WTC11 (cell line): ENCODE measurements at regions of chr11 and their contacts with region 1.

Region 1: DNA sequence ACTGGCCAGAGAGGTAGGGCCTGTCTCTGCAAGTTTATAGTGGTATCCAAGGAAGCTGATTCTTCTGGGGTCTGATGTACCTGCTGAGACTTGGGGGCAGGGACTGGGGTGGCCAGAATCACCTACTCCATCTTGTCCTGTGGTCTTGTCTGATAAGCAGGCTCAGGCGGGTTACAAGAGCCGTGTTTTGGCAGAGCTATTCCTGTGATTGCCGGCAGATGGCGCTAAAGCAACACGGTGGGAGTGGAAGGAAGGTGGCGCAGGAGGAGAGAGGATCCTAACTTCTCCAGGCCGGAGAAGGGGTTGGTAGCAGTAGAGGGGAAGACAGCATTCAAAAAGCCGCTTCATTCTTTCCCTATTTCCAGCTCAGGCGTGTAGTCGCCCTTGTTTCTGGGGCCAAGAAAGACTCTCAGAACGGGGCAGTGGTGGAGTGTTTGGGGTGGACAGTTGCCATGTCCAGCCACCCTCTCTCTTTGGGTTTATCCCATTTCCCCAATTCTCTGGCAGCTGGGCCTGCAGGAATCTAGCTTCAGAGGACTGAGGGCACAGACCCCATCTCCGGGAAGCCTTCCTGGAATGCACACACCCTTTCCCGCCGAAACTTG is 15.1 kb downstream of the CHRM1 start:
- DNase-seq: peak; percentile 94
- ATAC-seq: peak; percentile 54
- H3K4me3 Mint-ChIP-seq: no peak overlapping the region
- H3K27ac Mint-ChIP-seq: no peak overlapping the region
- H3K4me1 Mint-ChIP-seq: peaks cover 31% of the 10 kb centered on the region
- H3K27me3 Mint-ChIP-seq: peaks cover 13% of the 10 kb centered on the region
- CTCF ChIP-seq: peak; percentile 99

Region 2: GRCh38 chr11:62747475-62748160 is 158.4 kb before region 1 on chr11:
- CTCF ChIA-PET with region 1: no interaction called
- POLR2A ChIA-PET with region 1: no interaction called
- DNase-seq: no peak
- ATAC-seq: no peak
- H3K4me3 Mint-ChIP-seq: no peak overlapping the region
- H3K27ac Mint-ChIP-seq: peak overlapping the region; percentile 80
- H3K4me1 Mint-ChIP-seq: peaks cover 6% of the 10 kb centered on the region
- H3K27me3 Mint-ChIP-seq: no peaks in the 10 kb centered on the region
- CTCF ChIP-seq: no peak

Region 3: DNA sequence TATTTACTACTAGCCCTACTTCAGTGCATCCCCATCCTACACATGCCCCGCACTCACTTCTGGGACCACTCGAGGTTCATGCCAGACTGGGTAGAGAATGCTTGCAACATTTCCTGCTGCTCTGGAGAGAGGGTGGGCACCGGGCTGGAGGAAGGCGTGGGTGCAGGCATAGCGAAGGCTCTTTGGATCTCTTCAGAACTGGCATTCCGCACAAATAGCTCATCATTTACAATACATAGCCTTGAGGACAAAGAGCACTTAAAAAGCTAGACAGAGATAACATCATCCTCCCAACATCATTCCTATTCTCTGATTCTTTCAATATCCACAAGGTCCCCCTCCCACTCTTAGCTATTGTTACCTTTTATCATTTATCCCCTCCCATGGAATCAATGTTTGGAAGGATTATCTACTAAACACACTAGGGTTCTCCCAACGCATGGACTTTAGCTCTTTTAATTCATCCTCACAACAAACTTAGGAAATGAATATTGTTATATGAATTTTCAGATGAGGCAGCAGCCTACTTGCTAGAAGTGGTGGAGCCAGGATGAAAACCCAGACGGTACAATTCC is 111.7 kb before region 1 on chr11:
- CTCF ChIA-PET with region 1: no interaction called
- POLR2A ChIA-PET with region 1: no interaction called
- DNase-seq: no peak
- ATAC-seq: no peak
- H3K4me3 Mint-ChIP-seq: no peak overlapping the region
- H3K27ac Mint-ChIP-seq: no peak overlapping the region
- H3K4me1 Mint-ChIP-seq: peaks cover 18% of the 10 kb centered on the region
- H3K27me3 Mint-ChIP-seq: no peaks in the 10 kb centered on the region
- CTCF ChIP-seq: no peak

Region 4: GRCh38 chr11:62847767-62848314 is 58.2 kb before region 1 on chr11:
- CTCF ChIA-PET with region 1: no interaction called
- POLR2A ChIA-PET with region 1: no interaction called
- DNase-seq: no peak
- ATAC-seq: no peak
- H3K4me3 Mint-ChIP-seq: no peak overlapping the region
- H3K27ac Mint-ChIP-seq: no peak overlapping the region
- H3K4me1 Mint-ChIP-seq: peaks cover 20% of the 10 kb centered on the region
- H3K27me3 Mint-ChIP-seq: no peaks in the 10 kb centered on the region
- CTCF ChIP-seq: no peak

Region 5: GRCh38 chr11:62880803-62881578 is 25.0 kb before region 1 on chr11 and contains the start of gene SLC3A2:
- CTCF ChIA-PET with region 1: interaction called, 11 read pairs
- POLR2A ChIA-PET with region 1: no interaction called
- DNase-seq: peak; percentile 87
- ATAC-seq: peak; percentile 80
- H3K4me3 Mint-ChIP-seq: peak within 1 kb of the TSS; percentile 99
- H3K27ac Mint-ChIP-seq: peak within 1 kb of the TSS; percentile 100
- H3K4me1 Mint-ChIP-seq: peaks cover 49% of the 10 kb centered on the region
- H3K27me3 Mint-ChIP-seq: peaks cover 3% of the 10 kb centered on the region; the same call in 1 of the 2 replicates
- CTCF ChIP-seq: peak; percentile 22; the same call in 1 of the 2 replicates
- total RNA-seq, gene SLC3A2: 244 to 334 TPM (median 265 TPM) in 3 replicates

Region 6: DNA sequence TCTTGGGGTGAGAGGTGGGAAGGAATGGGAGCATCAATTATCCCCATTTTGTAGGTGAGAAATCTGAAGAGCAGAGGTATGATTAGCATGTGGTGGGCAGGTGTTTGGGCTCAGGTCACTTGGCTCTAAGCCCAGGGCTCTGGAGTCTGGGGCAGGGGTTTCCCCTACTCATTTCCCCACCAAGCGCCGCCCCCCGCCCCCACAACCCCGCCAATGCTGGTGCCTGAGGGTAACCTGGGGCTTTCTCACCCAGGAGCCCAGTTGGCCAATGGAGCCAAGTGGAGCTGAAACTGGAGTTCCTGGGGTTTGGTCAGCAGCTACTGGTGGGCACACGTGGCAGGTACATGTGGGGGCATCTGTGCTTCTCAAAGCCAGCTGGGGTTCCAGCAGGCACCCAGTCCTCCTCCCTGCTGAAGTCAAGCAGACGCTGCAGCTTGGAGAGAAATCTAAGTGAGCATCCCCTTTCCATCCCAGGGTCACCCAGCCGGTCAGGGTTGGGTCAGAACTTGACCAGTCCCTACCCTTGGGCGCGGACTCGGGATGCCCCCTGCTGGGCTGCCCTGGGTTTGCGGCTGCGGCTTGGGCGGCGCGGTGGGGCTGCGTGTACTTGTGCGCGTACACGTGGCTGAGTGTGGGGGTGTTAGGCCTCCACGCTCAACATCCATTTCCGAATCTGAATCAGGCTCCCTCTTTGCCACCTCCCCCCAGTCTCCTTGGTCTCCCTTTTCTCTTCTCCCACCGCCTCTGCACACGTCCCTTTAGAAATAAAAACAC is 16.8 kb after region 1 on chr11:
- CTCF ChIA-PET with region 1: interaction called, 268 read pairs
- POLR2A ChIA-PET with region 1: interaction called, 5 read pairs
- DNase-seq: peak; percentile 75
- ATAC-seq: peak; percentile 7
- H3K4me3 Mint-ChIP-seq: peak overlapping the region; percentile 65
- H3K27ac Mint-ChIP-seq: no peak overlapping the region
- H3K4me1 Mint-ChIP-seq: peaks cover 38% of the 10 kb centered on the region
- H3K27me3 Mint-ChIP-seq: peaks cover 60% of the 10 kb centered on the region
- CTCF ChIP-seq: peak; percentile 54

Region 7: DNA sequence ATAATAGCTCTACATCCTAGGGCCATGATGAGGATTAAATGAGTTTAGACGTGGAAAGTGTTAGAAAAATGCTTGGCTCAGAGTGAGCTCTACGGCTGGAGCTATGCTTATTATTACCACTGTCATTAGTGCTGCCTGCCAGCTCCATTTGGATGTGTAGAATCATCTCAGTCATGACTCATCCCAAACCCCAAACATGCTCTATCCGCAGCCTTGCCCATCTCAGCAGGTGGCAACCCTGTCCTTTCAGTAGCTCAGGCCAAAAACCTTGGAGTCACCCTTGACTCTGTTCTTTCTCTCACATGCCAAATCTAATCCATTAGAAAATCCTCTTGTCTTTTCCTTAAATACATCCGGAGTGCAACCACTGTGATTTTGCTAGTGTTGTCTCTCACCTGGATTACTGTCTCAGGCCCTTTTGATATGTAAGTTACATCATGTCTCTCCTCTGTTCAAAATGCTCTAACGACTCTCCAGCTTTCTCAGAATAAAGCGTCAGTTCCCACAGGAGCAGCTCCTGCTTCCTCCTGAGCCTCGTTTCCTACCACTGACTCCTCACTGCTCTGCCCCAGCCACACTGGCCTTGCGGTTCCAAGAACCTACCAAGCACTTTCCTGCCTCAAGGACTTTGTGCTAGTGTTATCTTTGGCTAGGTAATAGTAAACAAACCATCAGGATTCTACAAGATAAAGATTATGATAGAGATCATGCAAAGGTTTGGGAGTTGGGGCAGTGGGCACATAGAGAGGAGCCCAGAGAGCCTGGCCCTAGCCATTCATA is 25.7 kb after region 1 on chr11:
- CTCF ChIA-PET with region 1: interaction called, 268 read pairs
- POLR2A ChIA-PET with region 1: no interaction called
- DNase-seq: no peak
- ATAC-seq: no peak
- H3K4me3 Mint-ChIP-seq: no peak overlapping the region
- H3K27ac Mint-ChIP-seq: no peak overlapping the region
- H3K4me1 Mint-ChIP-seq: peaks cover 23% of the 10 kb centered on the region
- H3K27me3 Mint-ChIP-seq: peaks cover 34% of the 10 kb centered on the region
- CTCF ChIP-seq: no peak

Region 8: DNA sequence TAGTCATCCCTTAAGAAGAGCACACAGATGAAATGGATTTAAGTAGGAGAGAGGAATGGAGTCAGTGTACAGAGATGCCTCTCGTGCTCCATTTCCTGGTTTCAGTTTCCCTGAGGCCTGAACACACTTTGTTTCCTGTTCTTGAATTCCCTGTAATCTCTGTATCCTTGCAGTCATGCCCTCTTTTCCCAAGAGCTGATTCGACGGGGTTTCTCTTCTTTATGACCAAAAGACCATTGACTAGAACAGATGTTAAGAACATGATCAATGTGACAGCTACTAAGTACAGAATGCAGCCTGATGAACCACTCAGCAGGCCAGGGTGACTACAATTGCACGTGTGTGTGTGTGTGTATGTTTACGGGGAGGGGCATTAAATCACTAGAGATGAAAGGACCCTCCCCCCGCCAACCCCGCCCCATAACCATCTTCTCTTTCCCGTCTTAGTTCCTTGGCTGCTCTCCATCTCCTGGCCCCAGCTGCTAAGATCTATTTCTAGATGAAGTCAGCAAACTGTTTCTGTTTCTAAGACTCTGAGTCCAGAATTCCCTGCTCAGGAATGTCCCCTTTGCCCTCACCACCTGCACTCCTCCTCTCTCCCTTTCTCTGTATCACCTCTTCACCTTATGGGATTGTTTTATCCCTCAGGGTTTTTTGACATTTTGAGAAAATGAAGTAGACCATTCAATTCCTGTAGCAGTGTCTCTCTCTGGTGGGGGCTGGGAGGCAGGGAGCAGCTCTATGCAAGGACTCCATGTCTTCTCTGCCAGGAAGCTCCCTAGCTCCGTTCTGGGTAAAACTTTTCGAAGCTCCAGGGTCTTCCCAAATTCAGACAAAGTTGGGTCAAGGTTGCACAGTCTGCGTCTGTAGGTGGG is 52.8 kb after region 1 on chr11:
- CTCF ChIA-PET with region 1: interaction called, 13 read pairs
- POLR2A ChIA-PET with region 1: no interaction called
- DNase-seq: no peak
- ATAC-seq: no peak
- H3K4me3 Mint-ChIP-seq: no peak overlapping the region
- H3K27ac Mint-ChIP-seq: no peak overlapping the region
- H3K4me1 Mint-ChIP-seq: peaks cover 8% of the 10 kb centered on the region
- H3K27me3 Mint-ChIP-seq: no peaks in the 10 kb centered on the region; the same call in none of the 2 replicates
- CTCF ChIP-seq: no peak

Region 9: GRCh38 chr11:63015521-63016215 is 109.6 kb after region 1 on chr11 and contains the start of gene SLC22A8:
- CTCF ChIA-PET with region 1: interaction called, 535 read pairs
- POLR2A ChIA-PET with region 1: interaction called, 5 read pairs
- DNase-seq: no peak
- ATAC-seq: peak; percentile 27
- H3K4me3 Mint-ChIP-seq: no peak within 1 kb of the TSS
- H3K27ac Mint-ChIP-seq: no peak within 1 kb of the TSS
- H3K4me1 Mint-ChIP-seq: peaks cover 20% of the 10 kb centered on the region
- H3K27me3 Mint-ChIP-seq: peaks cover 5% of the 10 kb centered on the region; the same call in 1 of the 2 replicates
- CTCF ChIP-seq: no peak
- total RNA-seq, gene SLC22A8: not detected in 3 replicates

Region 10: GRCh38 chr11:63032457-63032856 is 126.4 kb after region 1 on chr11:
- CTCF ChIA-PET with region 1: interaction called, 19 read pairs
- POLR2A ChIA-PET with region 1: no interaction called
- DNase-seq: no peak
- ATAC-seq: no peak
- H3K4me3 Mint-ChIP-seq: no peak overlapping the region
- H3K27ac Mint-ChIP-seq: no peak overlapping the region
- H3K4me1 Mint-ChIP-seq: peaks cover 9% of the 10 kb centered on the region
- H3K27me3 Mint-ChIP-seq: peaks cover 3% of the 10 kb centered on the region
- CTCF ChIP-seq: no peak